ENCODE measurements at regions of chr2 and their contacts with region 1.

Region 1: DNA sequence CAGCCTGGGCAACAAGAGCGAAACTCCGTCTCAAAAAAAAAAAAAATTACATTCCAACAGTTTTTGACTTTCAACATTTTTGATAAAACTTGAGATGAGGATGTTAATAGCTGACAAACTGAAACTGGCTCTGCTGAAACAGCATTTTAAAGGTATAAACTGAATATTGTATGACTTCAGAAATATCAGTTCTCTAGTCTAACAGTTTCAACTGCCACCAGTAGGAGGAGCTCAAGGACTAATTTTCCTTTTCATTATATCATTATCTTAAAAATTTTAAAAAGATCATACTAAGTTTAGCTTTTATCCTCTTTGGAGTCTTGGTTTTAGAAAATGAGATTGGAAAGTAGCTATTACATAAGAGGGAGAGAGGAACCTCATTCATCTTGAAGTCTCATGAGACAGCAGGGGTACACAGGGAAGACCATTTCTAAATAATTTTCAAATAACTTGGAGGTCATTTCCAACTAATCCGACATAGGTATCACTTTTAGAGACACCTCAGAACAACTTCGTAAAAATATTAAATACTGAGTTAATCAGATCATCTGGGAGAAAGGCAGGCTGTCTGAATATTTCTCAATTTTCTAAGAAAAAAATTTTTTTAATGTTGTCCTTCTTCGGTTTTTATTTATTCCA is 37.6 kb upstream of the MCM6 start:
- DNase-seq: no peak
- ATAC-seq: no peak
- H3K4me3 ChIP-seq: no peak overlapping the region
- H3K27ac ChIP-seq: no peak overlapping the region
- H3K4me1 ChIP-seq: no peaks in the 10 kb centered on the region
- H3K27me3 ChIP-seq: no peaks in the 10 kb centered on the region
- CTCF ChIP-seq: peak; percentile 35 to 74 (median 62)
- POLR2A ChIP-seq: no peak

Region 2: DNA sequence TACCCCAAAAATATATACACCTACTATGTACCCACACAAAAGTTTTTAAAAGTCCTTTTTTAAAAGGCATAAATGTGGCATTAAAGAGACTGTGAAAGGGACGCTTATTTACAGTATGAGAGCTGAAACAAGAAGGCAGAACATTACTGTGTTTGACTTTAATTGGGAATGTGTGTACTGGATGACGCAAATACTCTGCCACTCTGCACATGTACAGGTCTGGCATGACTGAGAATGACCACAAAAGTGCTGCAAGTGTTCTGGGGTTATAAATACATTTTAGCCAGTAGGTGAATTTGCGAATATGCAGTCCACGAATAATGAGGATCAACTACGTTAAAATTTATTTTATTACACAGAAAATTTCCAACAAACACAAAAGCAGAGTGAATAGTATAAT is 60.2 kb after region 1 on chr2:
- in situ Hi-C with region 1: no loop called
- intact Hi-C with region 1: loop called (anchors 5 kb)
- DNase-seq: no peak
- ATAC-seq: no peak
- H3K4me3 ChIP-seq: no peak overlapping the region
- H3K27ac ChIP-seq: no peak overlapping the region
- H3K4me1 ChIP-seq: peaks cover 5 to 8% of the 10 kb centered on the region in 2 donors
- H3K27me3 ChIP-seq: no peaks in the 10 kb centered on the region
- CTCF ChIP-seq: no peak
- POLR2A ChIP-seq: no peak